Transverse colon (tissue), 4 donors: ENCODE measurements at regions of chrX and their contacts with region 1.

Region 1: DNA sequence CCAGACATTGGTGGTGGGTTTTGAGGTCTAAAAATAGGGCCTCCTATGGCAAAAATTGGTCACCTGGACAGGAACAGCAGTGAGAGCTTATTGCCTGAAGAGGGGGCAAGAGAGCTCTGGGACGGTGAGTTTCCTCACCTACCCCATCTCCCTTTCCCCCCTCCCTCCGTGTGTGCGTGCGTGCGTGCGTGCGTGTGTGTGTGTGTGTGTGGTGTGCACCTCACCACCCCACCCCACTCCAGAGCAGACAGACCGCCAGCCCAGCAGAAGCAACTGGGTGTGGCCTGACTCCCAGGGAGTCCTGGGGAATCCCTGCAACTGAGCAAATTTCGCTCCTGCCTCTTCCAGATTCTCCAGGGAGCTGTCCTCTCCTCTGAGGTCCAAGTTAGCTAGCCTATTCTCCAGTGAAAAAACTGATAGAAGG is 44.7 kb downstream of the PRPS1 start:
- DNase-seq: peak; percentile 87
- H3K4me3 ChIP-seq: no peak overlapping the region
- H3K27ac ChIP-seq: peak overlapping the region; percentile 88 to 96 (median 92)
- H3K4me1 ChIP-seq: peaks cover 4 to 24% (median 11%) of the 10 kb centered on the region in 4 donors
- H3K27me3 ChIP-seq: no peaks in the 10 kb centered on the region
- CTCF ChIP-seq: peak; percentile 60 to 85 (median 66)
- EP300 ChIP-seq: no peak
- POLR2A ChIP-seq: peak; percentile 34

Region 2: GRCh38 chrX:107562482-107562881 is 110.5 kb before region 1 on chrX:
- in situ Hi-C with region 1: no loop called
- intact Hi-C with region 1: no loop called
- DNase-seq: no peak
- H3K4me3 ChIP-seq: no peak overlapping the region
- H3K27ac ChIP-seq: no peak overlapping the region
- H3K4me1 ChIP-seq: no peaks in the 10 kb centered on the region
- H3K27me3 ChIP-seq: no peaks in the 10 kb centered on the region
- CTCF ChIP-seq: no peak
- EP300 ChIP-seq: no peak
- POLR2A ChIP-seq: no peak

Region 3: GRCh38 chrX:107716816-107717700 is 44.1 kb after region 1 on chrX:
- in situ Hi-C with region 1: loop called in 1 of 4 experiments (anchors 5 kb)
- intact Hi-C with region 1: loop called (anchors 5 kb)
- DNase-seq: peak; percentile 90
- H3K4me3 ChIP-seq: peak overlapping the region; percentile 65 to 86 (median 78)
- H3K27ac ChIP-seq: peak overlapping the region; percentile 92 to 96 (median 95)
- H3K4me1 ChIP-seq: peaks cover 0 to 16% (median 4%) of the 10 kb centered on the region in 4 donors
- H3K27me3 ChIP-seq: no peaks in the 10 kb centered on the region
- CTCF ChIP-seq: peak in 1 of 5 experiments; percentile 12
- EP300 ChIP-seq: peak; percentile 70
- POLR2A ChIP-seq: peak; percentile 97